RWPE1 (cell line): ENCODE measurements at regions of chr18 and their contacts with region 1.

Region 1: DNA sequence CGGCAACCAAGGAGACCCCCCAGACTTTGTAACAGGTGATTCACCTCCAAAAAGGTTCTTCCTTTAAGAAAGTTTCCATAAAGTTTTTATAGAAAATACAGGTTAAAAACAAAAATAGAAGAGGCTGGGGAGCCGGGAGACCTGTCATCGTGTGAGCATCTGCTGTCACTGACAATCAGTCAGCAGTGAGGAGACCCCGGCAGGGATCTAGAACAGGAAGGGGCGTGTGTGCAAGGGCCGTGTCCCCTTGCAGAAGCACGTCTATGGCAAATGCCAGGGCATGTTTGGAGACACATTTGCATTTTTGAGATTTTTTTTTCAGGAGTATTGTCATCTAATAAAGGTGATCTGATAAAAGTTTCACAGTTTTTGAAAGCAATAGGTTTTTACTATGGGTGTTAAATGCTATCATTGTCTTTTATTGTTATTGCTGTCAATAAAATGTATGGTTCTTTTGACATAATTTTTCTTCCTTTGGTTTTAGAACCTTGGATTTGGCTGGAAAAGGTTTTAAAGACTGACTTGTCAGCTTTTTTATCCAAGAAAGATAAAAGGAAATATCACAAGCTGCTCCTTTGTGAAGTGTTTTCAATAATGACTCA is 52.1 kb downstream of the MTCL1 start:
- DNase-seq: no peak
- H3K27ac ChIP-seq: peak overlapping the region; percentile 48
- CTCF ChIP-seq: no peak

Region 2: GRCh38 chr18:8706764-8707555 is 50.5 kb before region 1 on chr18:
- CTCF ChIA-PET with region 1: no interaction called
- POLR2A ChIA-PET with region 1: no interaction called
- DNase-seq: peak; percentile 68
- H3K27ac ChIP-seq: peak overlapping the region; percentile 95
- CTCF ChIP-seq: peak; percentile 68

Region 3: GRCh38 chr18:8801263-8801901 is 43.9 kb after region 1 on chr18:
- CTCF ChIA-PET with region 1: interaction called, 11 read pairs
- POLR2A ChIA-PET with region 1: no interaction called
- DNase-seq: peak; percentile 74
- H3K27ac ChIP-seq: peak overlapping the region; percentile 93
- CTCF ChIP-seq: no peak